ENCODE measurements at regions of chr13 and their contacts with region 1.

Region 1: GRCh38 chr13:96817336-96817941 is 176.8 kb downstream of the OXGR1 start:
- DNase-seq: no peak
- H3K4me3 Mint-ChIP-seq: no peak overlapping the region
- H3K27ac Mint-ChIP-seq: no peak overlapping the region
- H3K4me1 Mint-ChIP-seq: no peaks in the 10 kb centered on the region
- H3K27me3 Mint-ChIP-seq: no peaks in the 10 kb centered on the region

Region 2: DNA sequence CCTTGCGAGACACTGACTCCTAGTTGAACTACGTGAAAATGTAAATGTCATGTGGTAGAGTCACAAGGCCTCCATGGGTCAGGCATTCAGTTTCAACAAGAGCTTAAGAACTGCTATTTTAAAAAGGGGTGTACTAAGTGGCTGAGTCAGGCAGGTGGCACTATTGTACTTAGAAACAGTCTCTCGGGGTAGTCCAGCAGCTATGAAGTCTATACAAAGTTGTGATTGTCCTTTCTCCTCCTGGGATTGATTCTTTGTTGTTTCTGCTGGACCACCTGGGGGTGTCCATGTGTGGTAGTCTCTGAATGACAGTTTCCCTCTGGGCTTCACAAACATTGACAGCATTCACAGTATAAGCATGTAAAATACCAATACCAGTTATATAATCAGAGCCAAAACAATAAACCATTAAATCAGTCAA is 797.3 kb before region 1 on chr13:
- CTCF ChIA-PET with region 1: interaction called, 11 read pairs
- DNase-seq: no peak
- H3K4me3 Mint-ChIP-seq: no peak overlapping the region
- H3K27ac Mint-ChIP-seq: no peak overlapping the region
- H3K4me1 Mint-ChIP-seq: no peaks in the 10 kb centered on the region
- H3K27me3 Mint-ChIP-seq: no peaks in the 10 kb centered on the region